ENCODE measurements at regions of chr15 and their contacts with region 1.

Region 1: GRCh38 chr15:42449770-42450424 is 41.0 kb downstream of the ZNF106 start:
- DNase-seq: peak; percentile 22 to 60
- ATAC-seq: peak; percentile 32 to 54
- H3K4me3 ChIP-seq: peak overlapping the region; percentile 4 to 32 (median 24)
- H3K27ac ChIP-seq: peak overlapping the region; percentile 82 to 92 (median 88)
- H3K4me1 ChIP-seq: peaks cover 65 to 78% of the 10 kb centered on the region in 2 donors
- H3K27me3 ChIP-seq: no peaks in the 10 kb centered on the region
- CTCF ChIP-seq: no peak
- POLR2A ChIP-seq: no peak

Region 2: DNA sequence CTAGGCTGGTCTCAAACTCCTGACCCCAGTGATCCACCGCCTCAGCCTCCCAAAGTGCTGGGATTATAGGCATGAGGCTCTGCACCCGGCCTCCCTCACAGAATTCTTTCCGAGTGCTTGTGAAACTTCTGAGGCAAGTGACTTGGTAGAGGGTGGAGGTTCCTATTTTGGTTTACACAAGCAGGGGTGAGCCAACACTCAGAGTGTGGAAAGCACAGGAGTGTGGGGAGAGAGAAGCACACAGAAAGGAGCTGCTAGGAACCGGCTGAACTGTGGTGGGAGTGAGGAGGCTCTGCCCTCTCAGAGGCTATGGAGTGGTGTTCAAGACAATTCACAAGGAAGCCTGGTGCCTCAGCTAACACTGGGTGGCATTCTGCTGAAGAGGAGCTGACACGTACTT is 82.9 kb before region 1 on chr15:
- in situ Hi-C with region 1: no loop called
- intact Hi-C with region 1: loop called (anchors 5 kb)
- DNase-seq: peak; percentile 71 to 87
- ATAC-seq: peak; percentile 93 to 96
- H3K4me3 ChIP-seq: peak overlapping the region in 1 of 4 donors; percentile 23
- H3K27ac ChIP-seq: peak overlapping the region; percentile 93 to 97 (median 96)
- H3K4me1 ChIP-seq: peaks cover 71 to 75% of the 10 kb centered on the region in 2 donors
- H3K27me3 ChIP-seq: no peaks in the 10 kb centered on the region
- CTCF ChIP-seq: no peak
- POLR2A ChIP-seq: peak; percentile 63 to 72

Region 3: GRCh38 chr15:42427429-42428223 is 22.3 kb before region 1 on chr15:
- in situ Hi-C with region 1: no loop called
- intact Hi-C with region 1: loop called (anchors 2 kb)
- DNase-seq: no peak
- ATAC-seq: peak; percentile 90 to 96
- H3K4me3 ChIP-seq: peak overlapping the region in 1 of 4 donors; percentile 9
- H3K27ac ChIP-seq: peak overlapping the region; percentile 80 to 92 (median 84)
- H3K4me1 ChIP-seq: peaks cover 36 to 46% of the 10 kb centered on the region in 2 donors
- H3K27me3 ChIP-seq: no peaks in the 10 kb centered on the region
- CTCF ChIP-seq: no peak
- POLR2A ChIP-seq: no peak

Region 4: GRCh38 chr15:42533246-42533645 is 83.3 kb after region 1 on chr15:
- in situ Hi-C with region 1: no loop called
- intact Hi-C with region 1: no loop called
- DNase-seq: no peak
- ATAC-seq: no peak
- H3K4me3 ChIP-seq: no peak overlapping the region
- H3K27ac ChIP-seq: no peak overlapping the region
- H3K4me1 ChIP-seq: no peaks in the 10 kb centered on the region
- H3K27me3 ChIP-seq: no peaks in the 10 kb centered on the region
- CTCF ChIP-seq: no peak
- POLR2A ChIP-seq: no peak